ENCODE measurements at regions of chr15 and their contacts with region 1.

Region 1: DNA sequence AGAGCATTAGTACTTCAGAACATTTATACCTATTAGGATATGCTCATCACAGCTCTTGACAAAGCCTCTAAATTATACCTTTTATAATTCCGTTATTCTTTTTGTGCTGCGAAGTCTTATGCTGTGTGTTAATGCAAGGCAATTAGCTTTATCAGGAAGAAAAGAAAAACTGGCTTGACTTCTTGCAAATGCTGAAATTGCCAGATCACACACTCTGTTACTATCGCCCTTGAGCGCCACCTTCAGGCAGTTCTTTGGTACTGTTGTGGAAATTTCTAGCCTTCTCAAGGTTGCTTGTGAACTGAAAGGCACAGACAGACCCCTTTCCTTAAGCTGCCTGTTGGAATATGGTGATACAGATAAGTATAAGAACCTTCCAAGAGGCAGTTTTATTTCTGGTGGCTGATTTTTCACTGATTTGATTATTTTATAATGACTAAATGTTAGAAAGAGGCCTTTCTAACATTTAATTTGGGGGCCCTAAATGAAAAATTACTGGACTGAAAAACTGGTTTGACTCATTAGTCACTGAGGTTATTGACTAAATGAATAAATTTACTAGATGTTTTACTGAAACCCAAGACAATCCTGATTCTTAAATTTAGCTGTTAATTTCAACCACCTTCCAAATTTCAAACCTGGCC is 126.2 kb upstream of the RASGRP1 start:
- DNase-seq: no peak
- H3K4me3 ChIP-seq: no peak overlapping the region
- CTCF ChIP-seq: peak; percentile 77

Region 2: GRCh38 chr15:38297623-38298388 is 393.0 kb before region 1 on chr15:
- CTCF ChIA-PET with region 1: no interaction called
- POLR2A ChIA-PET with region 1: no interaction called
- DNase-seq: no peak
- H3K4me3 ChIP-seq: no peak overlapping the region
- CTCF ChIP-seq: no peak

Region 3: GRCh38 chr15:38453971-38454695 is 236.7 kb before region 1 on chr15 and contains the start of gene FAM98B:
- CTCF ChIA-PET with region 1: interaction called, 22 read pairs
- POLR2A ChIA-PET with region 1: interaction called, 6 read pairs
- DNase-seq: no peak
- H3K4me3 ChIP-seq: peak within 1 kb of the TSS; percentile 97
- CTCF ChIP-seq: no peak

Region 4: GRCh38 chr15:38461066-38461833 is 229.6 kb before region 1 on chr15:
- CTCF ChIA-PET with region 1: interaction called, 16 read pairs
- POLR2A ChIA-PET with region 1: no interaction called
- DNase-seq: no peak
- H3K4me3 ChIP-seq: no peak overlapping the region
- CTCF ChIP-seq: no peak

Region 5: DNA sequence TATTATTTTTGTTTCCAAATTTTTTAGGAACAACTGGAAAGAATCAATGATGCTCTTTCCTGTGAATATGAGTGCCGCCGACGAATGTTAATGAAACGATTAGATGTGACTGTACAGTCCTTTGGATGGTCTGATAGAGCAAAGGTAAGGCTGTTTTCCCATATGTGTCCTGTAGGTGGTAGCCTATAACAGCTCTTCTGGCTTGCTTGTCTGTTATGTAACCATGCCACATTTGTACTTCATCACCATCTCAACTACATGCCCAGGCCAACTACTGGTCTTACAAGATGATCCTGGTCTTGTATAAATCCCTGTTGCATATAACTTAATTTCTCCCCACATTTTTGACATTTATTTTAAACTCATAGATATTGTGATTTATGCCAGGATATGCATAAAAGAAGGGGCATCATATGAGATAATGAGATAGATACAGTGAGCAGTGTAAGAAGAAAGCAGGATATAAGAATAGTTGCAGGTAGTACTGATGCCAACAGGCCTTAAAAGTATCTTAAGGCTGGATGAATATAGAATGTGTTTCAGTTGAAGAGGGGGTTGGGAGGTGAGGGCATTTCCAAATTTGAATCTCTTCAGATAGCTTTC is 216.6 kb before region 1 on chr15:
- CTCF ChIA-PET with region 1: interaction called, 102 read pairs
- POLR2A ChIA-PET with region 1: interaction called, 3 read pairs
- DNase-seq: peak; percentile 67
- H3K4me3 ChIP-seq: no peak overlapping the region
- CTCF ChIP-seq: peak; percentile 77

Region 6: GRCh38 chr15:38521316-38521715 is 169.5 kb before region 1 on chr15:
- CTCF ChIA-PET with region 1: interaction called, 11 read pairs
- POLR2A ChIA-PET with region 1: no interaction called
- DNase-seq: no peak
- H3K4me3 ChIP-seq: no peak overlapping the region
- CTCF ChIP-seq: no peak

Region 7: DNA sequence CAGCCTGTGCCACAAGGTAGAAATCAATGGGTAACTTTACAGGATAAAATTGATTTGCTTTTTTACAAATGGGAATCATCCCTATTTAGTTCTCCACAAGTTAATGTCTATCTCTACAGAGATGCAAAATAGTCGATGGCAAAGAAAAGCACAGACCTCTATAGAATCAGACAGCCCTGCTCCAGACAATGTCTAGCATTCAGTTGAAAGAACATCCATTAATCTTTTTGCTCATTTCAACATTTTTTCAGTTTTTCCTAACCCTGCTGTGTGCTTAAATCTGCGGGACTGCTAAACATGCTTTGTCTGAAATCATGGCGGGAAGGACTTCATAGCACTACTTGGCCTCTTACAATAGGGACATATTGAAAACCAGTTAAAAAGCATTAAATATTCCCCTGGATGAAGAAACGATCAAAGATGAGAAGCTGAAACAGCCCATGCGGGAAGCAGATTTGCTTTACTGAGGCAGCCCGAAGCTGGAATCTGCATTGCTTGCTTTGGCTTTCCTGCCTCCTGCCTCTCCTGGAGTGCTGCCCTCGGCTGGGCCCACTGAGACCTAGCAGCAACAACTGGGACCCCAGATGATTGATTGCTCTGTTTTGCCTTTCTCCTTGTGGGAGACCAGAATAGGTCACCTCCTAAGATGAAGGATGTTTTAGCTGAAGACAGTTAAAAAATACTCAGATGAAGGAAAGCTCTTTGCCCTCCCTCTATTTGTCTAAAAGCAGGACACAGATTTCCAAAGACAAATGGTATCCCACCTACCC is 87.7 kb before region 1 on chr15:
- CTCF ChIA-PET with region 1: no interaction called
- POLR2A ChIA-PET with region 1: no interaction called
- DNase-seq: no peak
- H3K4me3 ChIP-seq: no peak overlapping the region
- CTCF ChIP-seq: no peak

Region 8: DNA sequence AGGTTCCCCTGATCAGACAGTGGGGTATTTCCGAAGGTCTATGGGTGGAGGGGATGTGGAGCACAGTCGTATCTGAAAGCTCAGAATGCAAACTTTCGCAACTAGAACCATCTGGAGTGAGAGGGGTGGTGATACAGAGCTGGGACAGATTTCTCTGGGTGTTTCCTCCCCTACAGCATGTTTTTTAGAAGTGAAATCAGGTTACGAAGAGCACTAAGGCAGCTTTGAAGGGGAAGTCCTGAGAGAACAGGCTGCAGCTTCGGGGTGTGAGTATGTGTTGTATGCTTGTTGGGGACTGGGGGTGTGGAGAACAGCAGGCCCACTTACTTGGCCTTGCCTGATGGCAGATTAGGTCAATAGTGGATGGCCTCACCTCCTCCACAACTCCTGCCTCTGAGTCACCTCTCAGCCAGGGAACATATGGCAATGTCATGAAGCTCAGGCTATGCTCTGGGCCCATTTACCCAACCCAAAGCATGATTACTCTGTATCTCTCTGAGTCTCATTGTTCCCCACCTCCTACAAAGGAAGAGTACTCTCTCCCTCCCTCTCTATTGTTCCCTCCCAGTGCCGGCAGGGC is 19.0 kb before region 1 on chr15:
- CTCF ChIA-PET with region 1: interaction called, 16 read pairs
- POLR2A ChIA-PET with region 1: no interaction called
- DNase-seq: no peak
- H3K4me3 ChIP-seq: no peak overlapping the region
- CTCF ChIP-seq: no peak

Region 9: DNA sequence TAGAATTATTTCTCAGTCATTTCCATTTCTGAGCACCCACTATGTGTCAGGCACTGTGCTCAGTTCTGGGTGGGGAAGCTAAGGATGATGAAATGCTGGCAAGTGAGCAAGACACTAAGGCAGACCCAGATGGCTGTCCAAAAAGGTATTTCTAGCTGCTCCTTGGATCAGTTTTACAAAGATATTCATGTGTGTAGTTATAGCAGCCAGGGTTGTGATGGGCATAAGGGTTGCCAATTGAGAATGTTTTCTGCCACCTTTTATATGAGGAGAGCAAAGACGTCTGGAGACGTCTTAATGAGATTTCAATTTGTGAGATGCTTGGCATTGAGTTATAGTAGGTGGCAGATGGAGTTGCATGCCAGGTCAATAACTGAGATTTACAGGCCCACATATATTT is 70.9 kb after region 1 on chr15:
- CTCF ChIA-PET with region 1: no interaction called
- POLR2A ChIA-PET with region 1: no interaction called
- DNase-seq: no peak
- H3K4me3 ChIP-seq: no peak overlapping the region
- CTCF ChIP-seq: no peak

Region 10: GRCh38 chr15:39095218-39095879 is 404.5 kb after region 1 on chr15:
- CTCF ChIA-PET with region 1: no interaction called
- POLR2A ChIA-PET with region 1: no interaction called
- DNase-seq: no peak
- H3K4me3 ChIP-seq: no peak overlapping the region
- CTCF ChIP-seq: no peak